Activated T-helper 1 cell treated with anti-CD3 and anti-CD28 coated beads, Interleukin-12 subunit alpha, Interleukin-12 subunit beta, Interleukin-2, Interleukin-4 antibody, amounts not matched to agents 30 ng/mL and 10 ng/mL and 1 ng/mL, durations not matched to agents 14 hours and 24 hours and 36 hours (primary cell): ENCODE measurements at regions of chr1 and their contacts with region 1.

Region 1: DNA sequence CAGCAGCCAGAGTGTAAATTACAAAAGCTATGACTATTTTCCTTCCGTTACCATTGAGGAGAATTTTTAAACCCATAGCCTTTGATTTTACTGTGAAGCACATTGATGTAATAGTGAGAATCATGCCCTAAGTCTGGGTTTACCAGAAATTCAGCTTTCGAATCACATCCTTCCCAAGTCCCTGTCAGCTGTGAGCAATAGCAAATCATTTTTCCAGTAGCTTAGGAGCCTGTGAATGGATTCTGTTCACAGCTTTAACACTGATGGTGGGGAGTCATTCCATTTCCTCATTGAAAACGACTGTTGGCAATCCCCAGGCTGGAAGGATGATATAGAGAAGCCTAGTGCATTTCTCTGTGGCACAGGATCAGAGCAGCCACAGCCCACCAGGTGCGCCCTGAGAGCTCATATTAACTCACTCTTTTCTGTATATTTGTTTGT is 82.2 kb upstream of the C1orf105 start:
- DNase-seq: peak; percentile 6
- H3K4me3 Mint-ChIP-seq: no peak overlapping the region
- H3K27ac Mint-ChIP-seq: peak overlapping the region; percentile 70
- H3K4me1 Mint-ChIP-seq: peaks cover 44% of the 10 kb centered on the region
- H3K27me3 Mint-ChIP-seq: no peaks in the 10 kb centered on the region

Region 2: DNA sequence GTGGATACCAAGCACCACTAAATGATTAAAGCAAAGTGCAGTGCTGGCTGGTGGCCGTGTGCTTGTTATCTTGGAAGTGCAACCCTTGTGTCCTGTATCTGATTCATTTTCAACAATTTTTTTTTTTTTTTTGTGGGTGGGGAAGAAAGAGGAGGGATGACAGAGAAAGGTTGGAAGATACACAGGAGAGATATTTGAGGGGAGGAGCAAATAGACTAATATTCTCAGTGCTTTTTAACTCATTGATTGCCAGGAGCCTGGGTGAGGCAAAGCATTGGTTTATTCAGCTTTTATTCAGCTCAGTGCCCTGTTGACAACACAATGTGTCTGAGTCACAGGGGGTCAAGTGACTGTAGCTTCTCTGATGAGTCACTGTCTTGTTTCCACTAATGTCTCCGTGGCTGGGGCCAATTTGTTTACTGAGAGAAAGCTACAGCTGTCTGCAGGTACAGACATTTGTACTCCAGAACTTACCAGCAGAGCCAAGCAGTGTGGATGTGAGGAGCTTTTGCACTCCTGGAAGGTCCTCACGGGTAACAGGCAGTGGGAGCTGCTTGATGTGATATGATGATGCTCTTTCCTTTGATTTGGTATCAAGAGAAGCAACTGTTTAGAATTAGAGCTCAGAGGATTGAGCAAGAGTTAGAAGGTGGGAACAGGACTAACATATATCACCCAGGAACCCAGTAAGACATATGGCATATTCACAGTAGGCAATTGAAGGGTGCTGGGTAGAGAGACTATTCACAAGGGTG is 520.6 kb before region 1 on chr1:
- intact Hi-C with region 1: loop called (anchors 5 kb)
- DNase-seq: peak; percentile 31
- H3K4me3 Mint-ChIP-seq: peak overlapping the region; percentile 61
- H3K27ac Mint-ChIP-seq: peak overlapping the region; percentile 90
- H3K4me1 Mint-ChIP-seq: peaks cover 31% of the 10 kb centered on the region
- H3K27me3 Mint-ChIP-seq: no peaks in the 10 kb centered on the region

Region 3: GRCh38 chr1:172135076-172135672 is 203.1 kb before region 1 on chr1:
- intact Hi-C with region 1: loop called (anchors 5 kb)
- DNase-seq: no peak
- H3K4me3 Mint-ChIP-seq: no peak overlapping the region
- H3K27ac Mint-ChIP-seq: no peak overlapping the region
- H3K4me1 Mint-ChIP-seq: peaks cover 19% of the 10 kb centered on the region
- H3K27me3 Mint-ChIP-seq: no peaks in the 10 kb centered on the region

Region 4: GRCh38 chr1:172180501-172181285 is 157.6 kb before region 1 on chr1:
- intact Hi-C with region 1: loop called (anchors 1 kb)
- DNase-seq: peak; percentile 22
- H3K4me3 Mint-ChIP-seq: peak overlapping the region; percentile 75
- H3K27ac Mint-ChIP-seq: peak overlapping the region; percentile 94
- H3K4me1 Mint-ChIP-seq: peaks cover 50% of the 10 kb centered on the region
- H3K27me3 Mint-ChIP-seq: no peaks in the 10 kb centered on the region

Region 5: GRCh38 chr1:172357753-172358385 is 19.6 kb after region 1 on chr1:
- intact Hi-C with region 1: loop called (anchors 1 kb)
- DNase-seq: no peak
- H3K4me3 Mint-ChIP-seq: peak overlapping the region; percentile 6
- H3K27ac Mint-ChIP-seq: peak overlapping the region; percentile 83
- H3K4me1 Mint-ChIP-seq: peaks cover 56% of the 10 kb centered on the region
- H3K27me3 Mint-ChIP-seq: no peaks in the 10 kb centered on the region

Region 6: GRCh38 chr1:172398970-172399755 is 60.8 kb after region 1 on chr1:
- intact Hi-C with region 1: loop called (anchors 1 kb)
- DNase-seq: no peak
- H3K4me3 Mint-ChIP-seq: no peak overlapping the region
- H3K27ac Mint-ChIP-seq: peak overlapping the region; percentile 4
- H3K4me1 Mint-ChIP-seq: peaks cover 52% of the 10 kb centered on the region
- H3K27me3 Mint-ChIP-seq: no peaks in the 10 kb centered on the region